ENCODE measurements at regions of chr3 and their contacts with region 1.

Region 1: GRCh38 chr3:52481819-52482521 is 13.2 kb upstream of the STAB1 start:
- DNase-seq: no peak

Region 2: DNA sequence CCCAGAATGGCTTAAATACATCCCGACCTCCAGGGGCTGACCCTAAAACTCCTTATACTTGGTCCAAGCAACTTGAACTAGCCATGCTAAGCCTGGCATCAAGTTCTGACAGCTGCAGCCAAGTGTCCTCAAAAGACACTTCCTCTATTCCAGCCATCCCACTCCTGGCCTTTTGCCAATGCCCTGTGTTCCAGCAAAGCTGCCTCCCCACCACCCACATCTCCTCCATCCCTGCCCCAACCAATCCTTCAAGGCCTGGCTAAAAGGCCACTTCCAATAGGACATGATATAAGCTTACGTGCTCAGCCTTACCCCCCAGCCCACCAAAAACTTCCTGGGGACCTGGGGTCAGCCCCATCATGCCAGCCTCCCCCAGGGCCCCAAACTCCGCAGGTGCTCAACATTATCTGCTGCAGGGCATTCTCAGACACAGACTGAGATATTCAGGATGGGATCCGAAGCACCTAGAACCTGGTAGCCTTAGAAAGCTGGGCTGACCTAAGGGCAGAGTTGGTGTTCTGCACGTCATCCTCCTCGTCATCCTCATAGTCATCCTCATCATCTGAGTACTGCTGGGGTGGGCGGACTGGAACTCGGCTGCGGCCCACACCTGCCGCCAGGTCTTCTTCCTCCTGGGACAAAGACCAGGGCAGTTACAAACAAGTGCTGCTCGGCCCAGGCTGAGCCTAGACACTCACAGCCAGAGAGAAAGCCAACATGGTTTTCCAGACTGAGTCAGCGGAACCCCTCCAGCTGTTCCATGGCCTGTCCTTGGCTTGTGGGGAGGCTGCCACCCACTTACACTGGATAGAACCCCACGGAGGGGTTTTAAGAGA is 77.8 kb before region 1 on chr3:
- in situ Hi-C with region 1: no loop called
- DNase-seq: no peak

Region 3: GRCh38 chr3:52444860-52445793 is 36.8 kb before region 1 on chr3 and contains the start of gene SEMA3G:
- in situ Hi-C with region 1: no loop called
- DNase-seq: peak; percentile 94
- total RNA-seq, gene SEMA3G: 0.10 and 0.98 TPM in 2 replicates

Region 4: DNA sequence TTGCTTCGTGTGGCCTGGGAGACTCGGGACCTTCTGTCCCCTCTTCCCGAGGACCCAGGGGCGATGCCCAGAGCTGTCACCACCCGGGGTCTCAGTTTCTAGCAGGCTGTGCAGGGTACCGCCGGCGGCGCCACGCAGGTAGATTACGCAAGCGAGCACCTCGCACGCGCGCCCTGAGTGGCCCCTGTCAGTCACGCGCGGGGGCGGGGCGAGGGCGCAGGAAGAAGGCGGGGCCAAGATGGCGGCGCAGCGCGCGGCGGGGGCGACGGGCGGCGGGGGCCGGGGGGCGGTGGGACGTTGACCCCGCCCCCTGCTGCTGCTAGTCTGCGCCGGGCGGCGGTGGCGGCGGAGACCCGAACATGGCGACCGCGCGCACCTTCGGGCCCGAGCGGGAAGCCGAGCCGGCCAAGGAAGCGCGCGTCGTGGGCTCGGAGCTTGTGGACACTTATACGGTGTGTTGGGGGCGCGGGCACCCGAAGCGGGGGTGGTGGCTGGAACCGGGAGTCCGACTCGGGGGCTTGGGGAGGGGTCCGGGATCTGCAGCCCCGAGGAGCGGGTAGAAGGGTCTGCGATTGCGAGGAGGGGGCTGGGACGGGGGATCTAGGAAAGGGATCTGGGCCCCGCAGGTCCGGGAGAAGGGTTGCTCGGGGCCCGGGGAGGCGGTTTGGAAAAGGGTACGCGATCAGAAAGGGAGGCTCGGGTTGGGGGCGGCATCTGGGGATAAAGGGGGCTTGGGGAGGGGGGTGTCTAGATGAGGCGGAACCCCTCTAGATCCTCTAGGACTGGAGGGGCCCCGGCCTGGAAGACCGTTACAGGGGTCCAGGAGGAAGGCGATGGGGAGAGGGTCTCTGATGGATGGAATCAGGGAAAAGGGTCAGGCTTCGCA is 26.4 kb before region 1 on chr3 and contains the start of gene NISCH:
- in situ Hi-C with region 1: no loop called
- DNase-seq: peak; percentile 85
- total RNA-seq, gene NISCH: 25.5 and 28.9 TPM in 2 replicates

Region 5: GRCh38 chr3:52570076-52570475 is 88.1 kb after region 1 on chr3:
- in situ Hi-C with region 1: no loop called
- DNase-seq: no peak

Region 6: DNA sequence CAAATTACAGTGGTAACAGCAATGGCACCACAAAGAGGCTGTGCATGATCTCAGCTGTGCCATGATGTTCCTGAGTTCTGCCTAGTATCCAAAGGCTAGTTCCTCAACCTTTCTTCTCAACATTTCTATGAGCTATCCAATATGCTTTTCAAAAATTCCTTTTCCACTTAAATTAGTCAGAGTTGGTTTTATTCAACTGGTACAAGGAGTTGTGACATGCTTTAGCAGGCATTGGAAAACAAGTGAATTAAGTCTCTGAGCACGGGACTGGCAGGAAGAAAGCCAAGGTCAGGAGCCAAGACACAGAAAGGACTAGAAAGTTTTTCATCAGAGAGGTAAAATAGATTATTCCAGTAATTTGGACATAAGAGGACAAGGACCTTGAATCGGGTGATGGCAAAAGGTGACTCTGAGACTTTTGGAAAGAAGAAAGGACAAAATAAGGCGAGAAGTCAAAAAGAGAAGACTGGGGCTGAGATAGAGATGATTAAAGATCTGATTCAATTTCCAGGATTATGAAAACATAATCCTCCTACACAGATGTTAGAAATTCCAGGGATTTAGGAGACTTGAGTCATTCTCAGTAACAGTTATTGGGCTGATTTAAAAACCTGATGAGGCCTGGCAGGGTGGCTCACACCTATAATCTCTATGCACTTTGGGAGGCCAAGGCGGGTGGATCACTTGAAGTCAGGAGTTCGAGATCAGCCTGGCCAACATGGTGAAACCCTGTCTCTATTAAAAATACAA is 167.7 kb after region 1 on chr3:
- in situ Hi-C with region 1: loop called (anchors 10 kb)
- DNase-seq: no peak